ENCODE measurements at regions of chr9 and their contacts with region 1.

Region 1: GRCh38 chr9:124710766-124711165 is 60.3 kb downstream of the NR6A1 start:
- DNase-seq: no peak
- H3K4me3 ChIP-seq: no peak overlapping the region
- H3K27ac ChIP-seq: no peak overlapping the region
- H3K4me1 ChIP-seq: no peaks in the 10 kb centered on the region
- H3K27me3 ChIP-seq: no peaks in the 10 kb centered on the region
- CTCF ChIP-seq: no peak

Region 2: DNA sequence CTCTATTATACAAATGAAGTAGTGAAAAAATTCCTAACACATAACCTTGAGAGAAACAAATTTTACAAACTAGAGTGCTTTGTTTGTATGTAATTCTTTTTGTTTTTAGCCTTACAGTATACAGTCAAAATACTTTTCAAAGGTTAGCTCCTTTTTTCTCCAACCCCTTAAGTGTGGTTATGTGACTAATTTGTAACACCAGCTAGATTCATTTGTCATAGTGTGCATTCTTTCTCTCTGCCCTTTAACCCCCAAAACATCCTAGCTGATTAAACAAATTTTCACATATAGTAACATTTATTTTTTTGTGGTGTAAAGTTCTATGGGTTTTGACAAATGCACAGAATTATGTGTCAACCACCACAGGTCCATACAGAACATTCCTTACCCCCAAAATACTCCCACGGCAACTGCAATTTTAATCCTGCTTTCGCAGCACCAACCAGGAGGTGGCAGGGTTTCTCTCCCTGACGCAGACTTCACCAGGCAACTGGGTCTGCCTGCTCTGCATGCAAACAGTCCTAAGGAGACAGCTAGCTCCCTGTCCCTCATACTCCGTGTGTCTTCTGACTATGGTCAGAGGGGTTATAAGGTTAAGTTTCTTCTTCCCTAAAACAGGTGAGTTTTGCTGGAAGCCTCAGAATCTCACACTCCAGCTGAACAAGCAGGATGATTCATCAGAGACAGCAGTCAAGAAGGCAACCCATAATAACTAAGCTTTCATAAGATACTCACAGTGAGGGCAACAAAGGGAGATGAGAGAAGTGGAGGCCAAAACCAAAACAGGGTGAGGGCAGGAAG is 159.1 kb before region 1 on chr9:
- intact Hi-C with region 1: loop called (anchors 5 kb)
- DNase-seq: peak; percentile 51
- H3K4me3 ChIP-seq: no peak overlapping the region
- H3K27ac ChIP-seq: no peak overlapping the region
- H3K4me1 ChIP-seq: no peaks in the 10 kb centered on the region
- H3K27me3 ChIP-seq: no peaks in the 10 kb centered on the region
- CTCF ChIP-seq: peak; percentile 43

Region 3: GRCh38 chr9:124617471-124618141 is 93.2 kb before region 1 on chr9:
- intact Hi-C with region 1: loop called (anchors 5 kb)
- DNase-seq: peak; percentile 85
- H3K4me3 ChIP-seq: no peak overlapping the region
- H3K27ac ChIP-seq: no peak overlapping the region
- H3K4me1 ChIP-seq: no peaks in the 10 kb centered on the region
- H3K27me3 ChIP-seq: no peaks in the 10 kb centered on the region
- CTCF ChIP-seq: peak; percentile 78

Region 4: DNA sequence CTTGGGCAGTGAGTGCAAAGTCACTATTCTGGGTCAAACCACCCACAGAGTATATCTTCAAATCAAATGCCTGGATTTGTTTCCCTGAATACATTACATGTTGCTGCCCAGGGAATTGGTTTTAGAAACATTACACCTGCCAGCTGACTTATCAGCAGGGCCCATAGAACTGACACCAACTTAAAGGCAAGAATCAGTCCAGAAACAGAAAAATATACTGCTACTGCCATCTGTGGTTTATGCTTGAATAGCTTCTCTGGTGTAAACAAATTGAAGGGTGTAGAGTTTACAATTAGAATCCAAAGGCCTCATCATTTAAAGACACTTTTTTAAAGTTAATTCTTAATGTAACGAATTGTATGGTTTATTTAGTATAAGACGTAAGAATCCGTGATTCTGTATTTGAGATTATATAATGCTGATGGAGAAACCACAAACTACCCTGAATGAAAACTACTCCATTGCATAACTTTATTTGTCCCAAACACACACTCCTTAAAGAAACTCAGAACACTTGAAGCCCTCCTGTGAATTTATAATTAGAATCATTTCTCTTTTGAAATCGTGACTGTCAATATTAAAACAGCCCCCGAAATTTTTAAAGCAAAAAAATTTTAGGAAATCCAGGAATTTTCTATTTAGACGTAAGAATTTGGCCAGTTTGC is 54.1 kb after region 1 on chr9:
- intact Hi-C with region 1: loop called (anchors 5 kb)
- DNase-seq: no peak
- H3K4me3 ChIP-seq: no peak overlapping the region
- H3K27ac ChIP-seq: no peak overlapping the region
- H3K4me1 ChIP-seq: no peaks in the 10 kb centered on the region
- H3K27me3 ChIP-seq: no peaks in the 10 kb centered on the region
- CTCF ChIP-seq: no peak

Measured in colonic mucosa (tissue), 4 donors.